ENCODE measurements at regions of chr17 and their contacts with region 1.

Region 1: DNA sequence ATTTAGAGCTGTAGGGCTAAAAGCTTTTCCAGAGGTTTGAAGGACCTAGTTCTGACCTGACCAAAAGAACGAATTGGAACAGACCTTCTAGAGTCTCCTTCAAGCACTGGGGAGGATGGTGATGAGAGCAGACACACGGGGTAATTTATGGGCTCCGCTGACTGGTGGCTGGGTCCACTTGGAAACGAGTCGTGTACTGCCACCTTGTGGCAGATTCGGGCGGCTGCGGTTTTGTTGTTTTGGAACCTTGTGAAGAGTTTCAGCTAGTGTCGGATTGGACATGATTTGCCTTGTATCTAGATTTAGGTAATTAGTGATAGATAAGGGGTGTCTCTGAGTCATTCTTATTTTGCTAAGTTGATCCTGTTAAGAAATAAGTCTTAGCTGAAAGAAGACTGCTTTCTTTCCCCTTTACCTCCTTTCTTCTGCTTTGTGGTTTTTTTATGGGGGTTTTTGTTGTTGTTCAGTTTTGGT is 98.9 kb downstream of the AATF start:
- DNase-seq: peak; percentile 90
- ATAC-seq: peak; percentile 83
- H3K4me3 Mint-ChIP-seq: no peak overlapping the region
- H3K27ac Mint-ChIP-seq: peak overlapping the region; percentile 66
- H3K4me1 Mint-ChIP-seq: peaks cover 12% of the 10 kb centered on the region
- H3K27me3 Mint-ChIP-seq: no peaks in the 10 kb centered on the region

Region 2: DNA sequence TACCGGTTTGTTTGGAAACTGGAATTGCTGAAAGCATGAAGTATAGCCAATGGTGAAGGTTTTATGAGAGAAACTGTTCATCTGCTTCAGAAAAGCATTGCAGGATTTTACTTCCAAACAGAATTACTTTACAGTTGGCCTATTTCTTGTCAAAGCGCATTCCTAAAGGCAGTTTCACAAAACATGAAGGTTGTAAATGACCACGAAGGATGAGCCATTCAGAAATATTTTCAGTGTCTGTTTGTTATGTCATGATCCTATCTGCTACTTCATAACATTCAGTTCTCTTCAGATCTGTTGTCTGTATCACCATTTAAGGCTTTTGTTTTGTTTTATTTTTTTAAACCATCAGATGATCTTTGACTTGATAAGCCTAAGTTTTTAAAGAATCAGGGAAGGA is 53.2 kb before region 1 on chr17:
- CTCF ChIA-PET with region 1: no interaction called
- DNase-seq: no peak
- ATAC-seq: no peak
- H3K4me3 Mint-ChIP-seq: no peak overlapping the region
- H3K27ac Mint-ChIP-seq: no peak overlapping the region
- H3K4me1 Mint-ChIP-seq: no peaks in the 10 kb centered on the region
- H3K27me3 Mint-ChIP-seq: no peaks in the 10 kb centered on the region

Region 3: GRCh38 chr17:37062021-37062420 is 14.4 kb after region 1 on chr17:
- CTCF ChIA-PET with region 1: interaction called, 11 read pairs
- DNase-seq: no peak
- ATAC-seq: no peak
- H3K4me3 Mint-ChIP-seq: no peak overlapping the region
- H3K27ac Mint-ChIP-seq: no peak overlapping the region
- H3K4me1 Mint-ChIP-seq: no peaks in the 10 kb centered on the region
- H3K27me3 Mint-ChIP-seq: peaks cover 8% of the 10 kb centered on the region

Region 4: DNA sequence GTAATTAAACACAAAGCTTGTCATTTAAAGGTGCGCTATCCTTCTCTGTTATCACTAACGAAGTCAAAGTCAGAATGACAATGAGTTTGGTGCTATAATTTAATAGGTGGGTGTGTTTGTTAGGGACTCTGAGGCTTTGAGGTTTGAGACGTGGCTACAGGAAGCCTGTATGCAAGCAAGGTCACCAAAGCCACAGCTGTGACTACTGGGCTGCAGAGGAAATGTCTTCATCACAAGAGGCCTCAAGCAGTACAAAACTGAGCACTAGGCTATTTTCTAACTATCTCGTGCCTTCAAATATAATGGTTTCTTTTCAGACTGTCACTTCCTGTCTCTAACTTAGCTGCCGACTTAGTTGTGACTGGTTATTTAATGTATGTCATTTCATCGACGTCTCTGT is 42.3 kb after region 1 on chr17:
- CTCF ChIA-PET with region 1: interaction called, 10 read pairs
- DNase-seq: peak; percentile 91
- ATAC-seq: peak; percentile 95
- H3K4me3 Mint-ChIP-seq: peak overlapping the region; percentile 29
- H3K27ac Mint-ChIP-seq: peak overlapping the region; percentile 91
- H3K4me1 Mint-ChIP-seq: peaks cover 69% of the 10 kb centered on the region
- H3K27me3 Mint-ChIP-seq: no peaks in the 10 kb centered on the region

Region 5: GRCh38 chr17:37239690-37240334 is 192.1 kb after region 1 on chr17:
- CTCF ChIA-PET with region 1: interaction called, 13 read pairs
- DNase-seq: no peak
- ATAC-seq: no peak
- H3K4me3 Mint-ChIP-seq: no peak overlapping the region
- H3K27ac Mint-ChIP-seq: no peak overlapping the region
- H3K4me1 Mint-ChIP-seq: no peaks in the 10 kb centered on the region
- H3K27me3 Mint-ChIP-seq: no peaks in the 10 kb centered on the region